Dendritic cell treated with granulocyte-macrophage colony-stimulating factor and Interleukin-4, amounts not matched to agents 40 ng/mL and 50 ng/mL, for 4 days (primary cell): ENCODE measurements at regions of chr9 and their contacts with region 1.

Region 1: GRCh38 chr9:69421908-69422801 is 97.1 kb downstream of the ENTREP1 start:
- H3K4me3 Mint-ChIP-seq: no peak overlapping the region
- H3K27ac Mint-ChIP-seq: no peak overlapping the region
- H3K4me1 Mint-ChIP-seq: no peaks in the 10 kb centered on the region
- H3K27me3 Mint-ChIP-seq: peaks cover 4% of the 10 kb centered on the region

Region 2: GRCh38 chr9:69324549-69325401 is 97.4 kb before region 1 on chr9 and contains the start of gene ENTREP1:
- intact Hi-C with region 1: no loop called
- H3K4me3 Mint-ChIP-seq: peak within 1 kb of the TSS; percentile 74
- H3K27ac Mint-ChIP-seq: peak within 1 kb of the TSS; percentile 52
- H3K4me1 Mint-ChIP-seq: peaks cover 17% of the 10 kb centered on the region
- H3K27me3 Mint-ChIP-seq: peaks cover 69% of the 10 kb centered on the region

Region 3: GRCh38 chr9:69444021-69444420 is 21.9 kb after region 1 on chr9:
- intact Hi-C with region 1: no loop called
- H3K4me3 Mint-ChIP-seq: no peak overlapping the region
- H3K27ac Mint-ChIP-seq: no peak overlapping the region
- H3K4me1 Mint-ChIP-seq: peaks cover 14% of the 10 kb centered on the region
- H3K27me3 Mint-ChIP-seq: no peaks in the 10 kb centered on the region

Region 4: GRCh38 chr9:69549310-69550202 is 127.4 kb after region 1 on chr9:
- intact Hi-C with region 1: loop called (anchors 5 kb)
- H3K4me3 Mint-ChIP-seq: no peak overlapping the region
- H3K27ac Mint-ChIP-seq: no peak overlapping the region
- H3K4me1 Mint-ChIP-seq: peaks cover 10% of the 10 kb centered on the region
- H3K27me3 Mint-ChIP-seq: peaks cover 3% of the 10 kb centered on the region

Region 5: DNA sequence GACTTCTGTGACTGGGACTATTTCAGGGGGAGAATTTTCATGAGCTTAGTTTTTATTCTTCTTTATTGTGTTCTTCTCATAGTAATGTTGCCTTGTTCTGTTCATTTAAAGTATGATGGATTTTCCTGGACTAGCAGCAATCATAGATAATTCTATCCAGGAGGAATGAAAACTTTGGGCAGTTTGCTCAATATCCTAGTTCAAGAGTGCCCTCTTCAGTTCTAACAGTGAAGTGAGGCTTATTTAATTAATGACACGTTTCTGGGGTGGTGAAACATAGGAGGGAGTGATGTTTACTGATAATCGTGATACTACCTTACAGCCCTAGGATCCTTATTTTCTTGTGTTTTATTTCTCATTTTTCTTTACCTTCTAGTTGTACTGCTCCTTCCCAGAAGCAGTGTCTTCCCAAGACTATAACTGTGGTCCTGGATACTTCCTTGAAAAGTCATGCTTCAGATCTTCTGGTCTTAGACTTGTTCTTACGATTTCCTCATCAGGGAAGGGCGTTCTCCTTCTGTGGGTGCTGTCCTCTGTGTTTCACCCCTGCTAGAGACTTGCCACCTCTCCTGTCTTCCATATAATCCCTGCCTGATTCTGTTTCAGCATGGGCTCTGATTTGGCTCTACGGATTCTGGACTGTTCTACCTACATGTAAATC is 455.8 kb after region 1 on chr9:
- intact Hi-C with region 1: loop called (anchors 2 kb)
- H3K4me3 Mint-ChIP-seq: no peak overlapping the region
- H3K27ac Mint-ChIP-seq: no peak overlapping the region
- H3K4me1 Mint-ChIP-seq: peaks cover 6% of the 10 kb centered on the region
- H3K27me3 Mint-ChIP-seq: peaks cover 2% of the 10 kb centered on the region

Region 6: GRCh38 chr9:69919461-69920061 is 497.4 kb after region 1 on chr9:
- intact Hi-C with region 1: loop called (anchors 2 kb)
- H3K4me3 Mint-ChIP-seq: no peak overlapping the region
- H3K27ac Mint-ChIP-seq: no peak overlapping the region
- H3K4me1 Mint-ChIP-seq: peaks cover 12% of the 10 kb centered on the region
- H3K27me3 Mint-ChIP-seq: peaks cover 16% of the 10 kb centered on the region

Region 7: DNA sequence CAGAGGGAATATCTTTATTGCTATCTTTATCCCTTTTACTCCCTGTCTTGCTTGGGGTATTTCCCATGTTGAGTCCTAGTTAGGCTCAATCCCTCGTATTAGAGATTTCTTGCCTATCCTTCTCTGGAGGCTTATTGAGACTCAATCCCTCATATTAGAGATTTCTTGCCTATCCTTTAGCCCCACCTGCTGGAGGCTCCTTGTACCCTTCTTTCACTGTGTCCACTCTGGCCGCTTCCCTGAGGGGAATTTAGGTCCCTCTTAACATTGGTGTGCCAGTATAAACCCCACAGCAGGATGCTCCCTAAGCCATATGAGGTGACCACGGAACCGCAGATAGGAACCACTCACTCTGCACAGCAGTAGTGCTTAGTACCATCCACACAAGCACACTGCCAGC is 510.7 kb after region 1 on chr9:
- intact Hi-C with region 1: loop called (anchors 5 kb)
- H3K4me3 Mint-ChIP-seq: no peak overlapping the region
- H3K27ac Mint-ChIP-seq: no peak overlapping the region
- H3K4me1 Mint-ChIP-seq: peaks cover 9% of the 10 kb centered on the region
- H3K27me3 Mint-ChIP-seq: peaks cover under 1% of the 10 kb centered on the region

Region 8: GRCh38 chr9:70111042-70111602 is 689.0 kb after region 1 on chr9:
- intact Hi-C with region 1: loop called (anchors 2 kb)
- H3K4me3 Mint-ChIP-seq: no peak overlapping the region
- H3K27ac Mint-ChIP-seq: no peak overlapping the region
- H3K4me1 Mint-ChIP-seq: peaks cover 19% of the 10 kb centered on the region
- H3K27me3 Mint-ChIP-seq: peaks cover 4% of the 10 kb centered on the region